CD4-positive, alpha-beta memory T cell (primary cell): ENCODE measurements at regions of chr1 and their contacts with region 1.

Region 1: GRCh38 chr1:93846211-93846991 is 32.6 kb downstream of the DNTTIP2 start:
- DNase-seq: peak; percentile 85 to 91 (median 88)
- H3K4me3 ChIP-seq: peak overlapping the region; percentile 58 to 92
- H3K4me3 Mint-ChIP-seq: peak overlapping the region; percentile 87 to 97 (median 90)
- H3K27ac ChIP-seq: peak overlapping the region; percentile 81
- H3K27ac Mint-ChIP-seq: peak overlapping the region; percentile 89 to 100 (median 95)
- H3K4me1 ChIP-seq: peaks cover 31% of the 10 kb centered on the region
- H3K4me1 Mint-ChIP-seq: peaks cover 17 to 44% (median 25%) of the 10 kb centered on the region in 4 donors
- H3K27me3 ChIP-seq: no peaks in the 10 kb centered on the region
- H3K27me3 Mint-ChIP-seq: peaks cover 1 to 6% of the 10 kb centered on the region in 2 donors

Region 2: GRCh38 chr1:93078986-93079654 is 767.3 kb before region 1 on chr1 and contains the start of gene MTF2:
- CTCF ChIA-PET with region 1: interaction called, 6 read pairs
- POLR2A ChIA-PET with region 1: interaction called, 20 read pairs
- intact Hi-C with region 1: loop called (anchors 1 kb)
- DNase-seq: peak; percentile 89 to 91 (median 90)
- H3K4me3 ChIP-seq: peak within 1 kb of the TSS; percentile 97
- H3K4me3 Mint-ChIP-seq: peak within 1 kb of the TSS; percentile 92 to 99 (median 98)
- H3K27ac ChIP-seq: peak within 1 kb of the TSS; percentile 96
- H3K27ac Mint-ChIP-seq: peak within 1 kb of the TSS; percentile 94 to 100 (median 95)
- H3K4me1 ChIP-seq: peaks cover 46% of the 10 kb centered on the region
- H3K4me1 Mint-ChIP-seq: peaks cover 21 to 58% (median 37%) of the 10 kb centered on the region in 4 donors
- H3K27me3 ChIP-seq: no peaks in the 10 kb centered on the region
- H3K27me3 Mint-ChIP-seq: no peaks in the 10 kb centered on the region
- total RNA-seq, gene MTF2: 46.5 to 47.4 TPM

Region 3: DNA sequence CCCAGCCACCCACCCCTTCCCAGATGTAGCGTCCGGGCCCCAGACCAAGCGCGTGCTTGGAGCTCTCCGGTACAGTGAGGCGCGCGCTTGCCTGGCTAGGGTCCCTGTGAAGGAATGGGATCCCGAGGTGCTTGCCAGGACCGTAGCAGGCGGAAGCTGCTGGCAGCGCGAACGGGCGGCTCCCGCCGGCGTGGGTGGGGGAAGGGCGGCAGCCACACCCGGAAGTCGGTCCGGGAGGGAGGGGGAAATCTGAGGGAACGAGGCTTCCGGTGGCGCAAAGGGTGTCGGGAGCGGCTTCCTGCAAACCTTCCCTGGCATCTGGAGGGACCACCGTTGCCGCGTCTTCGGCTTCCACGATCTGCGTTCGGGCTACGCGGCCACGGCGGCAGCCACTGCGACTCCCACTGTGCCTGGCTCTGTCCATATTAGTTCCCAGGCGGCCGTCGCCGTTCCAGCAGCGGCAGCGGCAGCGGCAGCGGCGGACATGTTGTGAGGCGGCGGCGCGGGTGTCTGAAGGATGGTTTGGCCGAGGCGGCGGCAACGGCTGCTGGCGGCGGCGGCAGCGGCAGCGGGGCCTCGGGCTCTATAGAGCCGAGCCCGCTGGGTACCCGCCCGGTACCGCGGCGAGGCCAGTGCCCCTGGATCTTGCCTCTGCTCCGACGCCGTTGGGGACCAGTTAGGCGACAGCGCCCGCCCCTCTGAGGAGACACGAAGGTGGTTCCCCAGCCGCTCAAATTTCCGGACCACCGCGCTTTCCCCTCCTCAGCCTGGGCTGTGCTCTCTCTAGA is 500.6 kb before region 1 on chr1 and contains the start of gene DR1:
- CTCF ChIA-PET with region 1: interaction called, 3 read pairs
- POLR2A ChIA-PET with region 1: interaction called, 12 read pairs
- intact Hi-C with region 1: loop called (anchors 1 kb)
- DNase-seq: peak; percentile 87 to 92 (median 89)
- H3K4me3 ChIP-seq: peak within 1 kb of the TSS; percentile 80 to 100
- H3K4me3 Mint-ChIP-seq: peak within 1 kb of the TSS; percentile 96 to 99 (median 98)
- H3K27ac ChIP-seq: peak within 1 kb of the TSS; percentile 91
- H3K27ac Mint-ChIP-seq: peak within 1 kb of the TSS; percentile 95 to 99 (median 98)
- H3K4me1 ChIP-seq: peaks cover 46% of the 10 kb centered on the region
- H3K4me1 Mint-ChIP-seq: peaks cover 23 to 59% (median 30%) of the 10 kb centered on the region in 4 donors
- H3K27me3 ChIP-seq: no peaks in the 10 kb centered on the region
- H3K27me3 Mint-ChIP-seq: no peaks in the 10 kb centered on the region
- total RNA-seq, gene DR1: 71.8 to 71.9 TPM

Region 4: DNA sequence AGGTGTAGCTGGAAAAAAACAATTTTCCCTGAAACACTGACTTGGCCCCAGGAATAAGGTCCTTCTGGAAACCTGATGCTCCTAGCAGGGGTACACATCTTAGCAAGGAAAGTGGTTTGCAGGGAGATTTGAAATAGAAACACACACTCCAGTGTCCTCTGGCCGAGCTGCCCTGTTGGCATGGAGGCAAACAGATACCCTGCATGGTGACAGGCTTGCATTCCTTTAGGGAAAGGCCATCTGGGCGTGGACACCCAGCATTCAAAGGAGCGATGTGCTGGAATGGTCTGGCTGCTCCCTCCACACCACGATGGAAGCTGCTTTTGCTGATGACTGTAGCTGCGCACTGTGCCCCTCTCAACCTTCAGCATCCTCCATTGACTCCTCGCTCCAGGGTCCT is 123.3 kb before region 1 on chr1:
- CTCF ChIA-PET with region 1: no interaction called
- POLR2A ChIA-PET with region 1: no interaction called
- intact Hi-C with region 1: no loop called
- DNase-seq: no peak
- H3K4me3 ChIP-seq: no peak overlapping the region
- H3K4me3 Mint-ChIP-seq: no peak overlapping the region
- H3K27ac ChIP-seq: no peak overlapping the region
- H3K27ac Mint-ChIP-seq: no peak overlapping the region
- H3K4me1 ChIP-seq: no peaks in the 10 kb centered on the region
- H3K4me1 Mint-ChIP-seq: no peaks in the 10 kb centered on the region
- H3K27me3 ChIP-seq: no peaks in the 10 kb centered on the region
- H3K27me3 Mint-ChIP-seq: no peaks in the 10 kb centered on the region

Region 5: GRCh38 chr1:93814059-93814794 is 32.2 kb before region 1 on chr1:
- CTCF ChIA-PET with region 1: interaction called, 65 read pairs
- POLR2A ChIA-PET with region 1: interaction called, 9 read pairs
- intact Hi-C with region 1: no loop called
- DNase-seq: peak in 4 of 5 donors; percentile 33 to 51 (median 38)
- H3K4me3 ChIP-seq: no peak overlapping the region
- H3K4me3 Mint-ChIP-seq: no peak overlapping the region
- H3K27ac ChIP-seq: no peak overlapping the region
- H3K27ac Mint-ChIP-seq: no peak overlapping the region
- H3K4me1 ChIP-seq: peaks cover 20% of the 10 kb centered on the region
- H3K4me1 Mint-ChIP-seq: peaks cover 13 to 23% (median 17%) of the 10 kb centered on the region in 4 donors
- H3K27me3 ChIP-seq: no peaks in the 10 kb centered on the region
- H3K27me3 Mint-ChIP-seq: no peaks in the 10 kb centered on the region

Region 6: GRCh38 chr1:93904228-93904627 is 57.8 kb after region 1 on chr1:
- CTCF ChIA-PET with region 1: interaction called, 18 read pairs
- POLR2A ChIA-PET with region 1: interaction called, 61 read pairs
- intact Hi-C with region 1: loop called (anchors 1 kb)
- DNase-seq: peak in 4 of 5 donors; percentile 14 to 31 (median 18)
- H3K4me3 ChIP-seq: no peak overlapping the region
- H3K4me3 Mint-ChIP-seq: peak overlapping the region; percentile 27 to 78 (median 67)
- H3K27ac ChIP-seq: peak overlapping the region; percentile 47
- H3K27ac Mint-ChIP-seq: peak overlapping the region; percentile 26 to 90 (median 75)
- H3K4me1 ChIP-seq: peaks cover 41% of the 10 kb centered on the region
- H3K4me1 Mint-ChIP-seq: peaks cover 32 to 42% (median 36%) of the 10 kb centered on the region in 4 donors
- H3K27me3 ChIP-seq: no peaks in the 10 kb centered on the region
- H3K27me3 Mint-ChIP-seq: no peaks in the 10 kb centered on the region

Region 7: GRCh38 chr1:95233737-95234500 is 1387.5 kb after region 1 on chr1 and contains the start of gene RWDD3:
- CTCF ChIA-PET with region 1: interaction called, 3 read pairs
- POLR2A ChIA-PET with region 1: interaction called, 3 read pairs
- intact Hi-C with region 1: loop called (anchors 10 kb)
- DNase-seq: peak; percentile 91 to 96 (median 93)
- H3K4me3 ChIP-seq: peak within 1 kb of the TSS; percentile 58 to 81
- H3K4me3 Mint-ChIP-seq: peak within 1 kb of the TSS; percentile 89 to 95 (median 90)
- H3K27ac ChIP-seq: peak within 1 kb of the TSS; percentile 69
- H3K27ac Mint-ChIP-seq: peak within 1 kb of the TSS; percentile 86 to 94 (median 91)
- H3K4me1 ChIP-seq: peaks cover 29% of the 10 kb centered on the region
- H3K4me1 Mint-ChIP-seq: peaks cover 22 to 54% (median 42%) of the 10 kb centered on the region in 4 donors
- H3K27me3 ChIP-seq: no peaks in the 10 kb centered on the region
- H3K27me3 Mint-ChIP-seq: peaks cover 6 to 10% of the 10 kb centered on the region in 2 donors
- total RNA-seq, gene RWDD3: 22.5 to 27.5 TPM